Activated CD4-positive, alpha-beta memory T cell treated with anti-CD3 and anti-CD28 coated beads for 36 hours (primary cell): ENCODE measurements at regions of chr9 and their contacts with region 1.

Region 1: DNA sequence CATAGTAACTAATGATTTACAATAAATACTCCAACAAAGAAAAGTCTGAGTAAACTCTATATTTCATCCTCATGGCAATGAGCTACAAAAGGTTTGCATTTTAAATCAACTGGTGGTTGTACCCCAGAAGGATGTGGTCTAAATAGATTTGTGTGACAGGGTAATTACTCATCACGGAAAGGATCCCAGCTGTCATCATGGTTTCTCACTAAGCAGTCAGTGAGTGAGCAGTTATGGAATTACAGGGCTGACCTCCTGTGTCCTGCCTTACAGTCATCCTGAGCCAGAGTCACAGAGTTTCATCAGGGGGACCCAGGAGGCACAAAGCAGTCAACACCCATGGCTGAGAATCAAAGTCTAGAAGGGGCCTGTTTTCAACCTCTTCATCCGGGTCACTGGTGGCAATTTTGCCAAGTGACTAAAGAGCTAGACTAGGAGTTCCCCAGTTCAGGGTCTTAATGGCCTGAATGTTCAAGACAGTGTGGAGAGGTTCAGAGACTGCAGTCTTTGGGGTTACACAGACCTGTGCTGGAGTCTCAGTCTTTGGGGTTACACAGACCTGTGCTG is 210.7 kb upstream of the SLC24A2 start:
- DNase-seq: peak; percentile 85
- H3K4me3 Mint-ChIP-seq: no peak overlapping the region
- H3K27ac Mint-ChIP-seq: peak overlapping the region; percentile 88
- H3K4me1 Mint-ChIP-seq: peaks cover 49% of the 10 kb centered on the region
- H3K27me3 Mint-ChIP-seq: peaks cover 1% of the 10 kb centered on the region

Region 2: DNA sequence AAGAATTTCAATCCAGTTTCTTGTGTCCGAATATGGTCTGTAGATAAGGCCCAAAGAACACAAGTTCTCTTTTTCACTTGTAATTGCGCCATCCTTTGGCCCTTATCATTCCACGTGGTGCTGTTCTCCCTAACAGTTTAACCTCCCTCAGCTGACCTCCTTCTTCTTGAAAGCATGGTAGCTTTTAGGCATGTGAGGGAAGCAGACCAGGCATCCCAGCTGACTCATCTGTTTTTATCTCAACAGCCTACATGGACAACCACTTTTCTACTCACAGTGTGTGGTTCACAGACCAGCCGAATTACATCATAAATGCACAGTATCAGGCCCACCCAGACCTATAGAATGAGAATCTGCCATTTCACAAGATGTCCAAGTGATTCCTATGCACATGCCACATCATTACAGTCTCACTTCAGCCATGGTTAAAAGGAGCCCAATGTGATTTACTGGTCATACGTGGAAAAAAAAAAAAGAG is 845.4 kb before region 1 on chr9:
- CTCF ChIA-PET with region 1: no interaction called
- POLR2A ChIA-PET with region 1: no interaction called
- intact Hi-C with region 1: loop called (anchors 5 kb)
- DNase-seq: peak; percentile 18
- H3K4me3 Mint-ChIP-seq: no peak overlapping the region
- H3K27ac Mint-ChIP-seq: no peak overlapping the region
- H3K4me1 Mint-ChIP-seq: peaks cover 36% of the 10 kb centered on the region
- H3K27me3 Mint-ChIP-seq: no peaks in the 10 kb centered on the region

Region 3: DNA sequence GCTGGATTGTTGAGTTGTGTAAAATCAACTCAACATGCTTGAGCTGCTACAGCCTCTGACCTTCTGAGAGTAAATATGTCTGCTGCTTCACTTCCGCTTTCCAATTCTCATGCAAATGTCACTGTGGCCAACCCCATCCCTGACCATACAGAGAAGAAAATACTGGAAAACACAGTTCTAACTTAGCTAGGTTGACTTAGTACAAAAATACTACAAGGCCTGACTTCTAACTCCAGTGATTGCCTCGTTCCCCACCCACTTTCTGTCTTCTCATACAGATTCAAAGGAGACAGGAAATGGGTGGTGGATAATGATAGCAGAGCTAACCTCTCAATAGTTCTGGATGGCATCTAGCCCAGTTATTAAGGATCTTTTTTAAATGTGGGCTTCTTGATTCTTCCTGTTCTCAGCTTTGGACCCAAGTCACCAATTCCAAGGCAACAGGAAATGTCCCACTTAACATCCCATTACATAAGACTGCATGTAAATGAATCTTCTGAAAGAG is 15.9 kb after region 1 on chr9:
- CTCF ChIA-PET with region 1: interaction called, 3 read pairs
- POLR2A ChIA-PET with region 1: interaction called, 4 read pairs
- intact Hi-C with region 1: loop called (anchors 1 kb)
- DNase-seq: no peak
- H3K4me3 Mint-ChIP-seq: no peak overlapping the region
- H3K27ac Mint-ChIP-seq: no peak overlapping the region
- H3K4me1 Mint-ChIP-seq: peaks cover 26% of the 10 kb centered on the region
- H3K27me3 Mint-ChIP-seq: peaks cover 1% of the 10 kb centered on the region

Region 4: GRCh38 chr9:20178197-20178596 is 178.6 kb after region 1 on chr9:
- CTCF ChIA-PET with region 1: no interaction called
- POLR2A ChIA-PET with region 1: no interaction called
- intact Hi-C with region 1: no loop called
- DNase-seq: no peak
- H3K4me3 Mint-ChIP-seq: no peak overlapping the region
- H3K27ac Mint-ChIP-seq: no peak overlapping the region
- H3K4me1 Mint-ChIP-seq: peaks cover 8% of the 10 kb centered on the region
- H3K27me3 Mint-ChIP-seq: no peaks in the 10 kb centered on the region

Region 5: DNA sequence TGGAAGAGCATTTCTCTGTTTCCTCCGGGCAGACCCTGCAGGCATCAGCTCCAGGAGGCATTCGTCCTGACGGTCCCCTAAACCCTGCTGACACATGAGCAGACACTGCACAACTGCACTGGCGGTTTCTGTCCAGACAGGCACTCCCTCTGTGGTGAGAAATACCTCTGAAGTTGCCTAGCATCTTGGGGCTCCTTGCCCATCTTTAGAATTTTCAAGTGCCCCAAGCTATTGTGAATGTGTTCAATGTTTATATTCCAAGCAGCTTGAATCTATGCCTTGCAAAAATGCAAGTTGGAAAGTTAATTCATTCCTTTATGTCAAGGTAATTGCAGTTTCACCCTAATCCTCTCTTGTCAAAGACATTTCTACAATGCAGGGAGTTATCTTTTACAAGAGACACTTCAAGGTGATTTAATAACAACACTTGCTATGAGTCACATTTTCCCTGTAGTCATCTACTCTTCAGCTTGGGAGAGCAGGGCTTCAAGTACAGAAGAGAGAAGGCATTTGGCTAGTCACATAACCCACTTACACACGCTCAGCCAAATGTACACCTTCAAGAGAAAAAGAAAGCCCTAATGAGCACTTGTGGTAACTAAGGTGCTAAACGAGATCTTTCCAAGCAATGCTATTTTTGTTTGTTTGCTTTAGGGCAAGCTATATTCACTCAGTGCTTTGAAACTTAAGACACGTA is 320.2 kb after region 1 on chr9:
- CTCF ChIA-PET with region 1: no interaction called
- POLR2A ChIA-PET with region 1: no interaction called
- intact Hi-C with region 1: loop called (anchors 1 kb)
- DNase-seq: peak; percentile 48
- H3K4me3 Mint-ChIP-seq: no peak overlapping the region
- H3K27ac Mint-ChIP-seq: peak overlapping the region; percentile 63
- H3K4me1 Mint-ChIP-seq: peaks cover 80% of the 10 kb centered on the region
- H3K27me3 Mint-ChIP-seq: no peaks in the 10 kb centered on the region

Region 6: DNA sequence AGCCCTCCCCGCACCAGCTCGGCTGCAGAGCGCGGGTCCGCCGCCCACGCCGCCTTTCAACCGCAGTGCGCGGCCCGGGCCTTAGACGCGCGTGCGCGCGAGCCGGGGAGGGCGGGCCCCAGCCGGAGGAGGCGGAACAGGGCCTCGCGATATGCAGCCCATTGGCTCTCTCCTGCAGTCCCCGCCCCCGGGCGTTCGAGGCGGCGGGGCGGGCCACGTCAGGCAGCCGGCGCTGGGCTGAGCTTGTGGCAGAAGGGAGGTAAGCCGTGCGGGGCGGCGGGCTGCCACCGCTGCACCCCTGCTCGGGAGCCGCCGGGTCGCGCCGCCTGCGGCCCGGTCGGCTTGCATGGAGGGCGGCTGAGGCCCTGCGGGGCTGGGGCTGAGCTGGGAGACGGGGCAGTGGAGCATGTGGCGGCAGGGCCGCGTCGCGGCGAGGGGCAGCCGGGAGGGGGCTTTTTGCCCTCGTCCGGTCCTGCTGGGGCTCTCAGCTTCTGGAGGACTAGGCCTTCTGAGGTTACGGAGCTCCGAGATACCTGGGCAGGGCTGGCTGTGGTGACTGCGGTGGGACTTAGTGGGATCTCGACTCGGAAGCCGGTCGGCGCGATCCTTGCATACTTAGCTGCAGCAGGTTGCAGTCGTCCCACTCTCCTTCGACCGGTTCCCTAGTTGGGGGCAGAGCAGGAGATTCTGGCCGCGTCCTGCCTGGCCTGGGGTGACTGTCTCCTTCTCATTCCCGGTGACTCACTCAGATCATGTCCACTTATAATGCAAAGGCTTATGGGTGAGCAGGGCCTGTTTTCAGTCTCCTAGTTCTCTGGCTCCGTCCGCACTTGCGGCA is 684.7 kb after region 1 on chr9 and contains the start of gene FOCAD:
- CTCF ChIA-PET with region 1: no interaction called
- POLR2A ChIA-PET with region 1: interaction called, 10 read pairs
- intact Hi-C with region 1: loop called (anchors 1 kb)
- DNase-seq: peak; percentile 97
- H3K4me3 Mint-ChIP-seq: peak within 1 kb of the TSS; percentile 83
- H3K27ac Mint-ChIP-seq: peak within 1 kb of the TSS; percentile 85
- H3K4me1 Mint-ChIP-seq: peaks cover 22% of the 10 kb centered on the region
- H3K27me3 Mint-ChIP-seq: no peaks in the 10 kb centered on the region
- total RNA-seq, gene FOCAD: 35.4 to 37.1 TPM